K562 (cell line): ENCODE measurements at regions of chr3 and their contacts with region 1.

Region 1: DNA sequence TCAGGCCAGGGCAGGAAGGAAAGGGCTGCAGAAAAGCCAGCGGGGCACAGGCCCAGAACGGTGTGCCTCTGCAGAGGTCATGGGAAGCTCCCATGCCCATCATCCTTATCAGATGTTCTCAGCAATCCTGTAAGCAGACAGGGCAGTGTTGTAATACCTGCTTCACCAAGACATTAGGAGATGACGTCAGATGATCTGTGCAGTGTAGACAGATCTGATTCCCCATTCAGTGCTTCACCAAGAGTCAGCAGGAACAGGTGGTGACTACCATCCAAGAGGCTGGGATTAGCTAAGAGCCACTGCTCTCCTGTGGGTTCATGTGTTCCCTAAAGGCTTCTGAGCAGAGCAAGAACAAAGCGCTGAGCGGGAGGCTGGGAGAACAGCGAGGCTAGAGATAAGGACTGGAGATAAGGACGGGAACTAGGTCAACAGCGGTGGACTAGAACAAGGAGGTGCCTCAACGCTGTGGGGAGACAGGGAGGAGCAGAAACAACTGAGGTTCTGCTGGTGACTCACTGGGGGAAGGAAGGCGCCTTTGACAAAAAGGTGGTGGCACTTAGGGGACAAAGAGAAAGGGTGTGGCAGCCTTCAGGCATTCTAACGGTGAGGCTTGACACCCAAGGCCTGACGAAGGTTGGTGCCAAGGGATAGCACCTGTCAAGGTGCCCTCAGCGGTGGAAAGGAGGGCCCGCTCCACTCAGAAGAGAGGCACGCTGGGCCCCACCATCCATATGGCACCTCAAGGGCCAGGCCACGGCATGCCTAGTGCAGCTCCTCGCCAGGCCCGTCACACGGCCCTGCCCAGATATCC is 28.4 kb downstream of the CCDC12 start:
- DNase-seq: peak; percentile 79 to 91 (median 84)
- ATAC-seq: peak; percentile 81
- H3K4me3 ChIP-seq: no peak overlapping the region
- H3K27ac ChIP-seq: peak overlapping the region; percentile 61
- H3K4me1 ChIP-seq: peaks cover 54 to 81% of the 10 kb centered on the region in 2 experiments
- H3K27me3 ChIP-seq: no peaks in the 10 kb centered on the region
- CTCF ChIP-seq: no peak
- EP300 ChIP-seq: peak; percentile 55; the same call in 1 of the 2 replicates
- POLR2A ChIP-seq: no peak; the same call in 1 of the 2 replicates
- RAD21 ChIP-seq: peak in 1 of 2 experiments; percentile 31; a peak in 1 of 4 replicates

Region 2: DNA sequence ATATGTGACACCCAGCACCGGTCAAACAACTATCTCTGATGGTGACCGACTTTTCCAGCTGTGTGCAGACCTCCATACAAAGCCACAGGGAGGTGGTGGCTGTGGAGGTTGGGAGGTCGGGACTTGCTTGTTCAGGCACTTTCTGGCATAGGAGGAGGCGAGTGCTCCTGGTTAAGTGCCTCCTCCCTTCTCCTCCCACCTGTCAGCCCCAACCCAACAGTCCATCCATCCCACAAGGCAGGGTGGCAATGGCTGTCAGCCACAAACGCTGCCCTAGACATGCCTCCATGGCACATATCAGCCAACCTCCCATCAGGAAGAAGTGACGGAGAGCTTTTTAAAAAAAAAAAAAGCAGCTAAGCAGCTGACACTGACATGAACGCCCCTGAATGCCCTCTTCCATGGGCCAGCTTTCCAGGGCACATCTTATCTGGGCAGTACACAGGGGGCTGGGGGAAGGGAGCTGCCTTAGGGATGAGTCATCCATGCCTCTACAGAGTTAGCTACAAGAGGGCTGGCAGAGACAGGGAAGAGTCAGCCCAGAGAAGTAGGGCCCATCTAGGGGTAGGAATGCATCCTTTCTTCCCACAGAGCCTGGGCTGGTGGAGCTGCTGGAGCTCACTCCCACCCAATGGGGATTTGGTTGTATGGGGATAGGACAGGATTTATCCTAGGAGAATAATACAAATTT is 12.9 kb before region 1 on chr3:
- CTCF ChIA-PET with region 1: no interaction called
- POLR2A ChIA-PET with region 1: interaction called, 14 read pairs
- in situ Hi-C with region 1: no loop called
- intact Hi-C with region 1: no loop called
- DNase-seq: peak; percentile 84 to 88 (median 86)
- ATAC-seq: peak; percentile 81
- H3K4me3 ChIP-seq: no peak overlapping the region
- H3K27ac ChIP-seq: peak overlapping the region; percentile 42; the same call in 2 of the 3 replicates
- H3K4me1 ChIP-seq: peaks cover 39 to 40% of the 10 kb centered on the region in 2 experiments
- H3K27me3 ChIP-seq: no peaks in the 10 kb centered on the region
- CTCF ChIP-seq: peak; percentile 26 to 47 (median 44); a peak in 4 of 6 replicates
- EP300 ChIP-seq: peak; percentile 85
- POLR2A ChIP-seq: 0 out of 2 replicates have a peak, but pooled peaks have one; percentile 29
- RAD21 ChIP-seq: peak; percentile 14 to 31; a peak in 3 of 4 replicates

Region 3: GRCh38 chr3:46976326-46977190 is 28.4 kb after region 1 on chr3 and contains the start of gene CCDC12:
- CTCF ChIA-PET with region 1: no interaction called
- POLR2A ChIA-PET with region 1: interaction called, 7 read pairs
- in situ Hi-C with region 1: no loop called
- intact Hi-C with region 1: loop called (anchors 2 kb)
- DNase-seq: peak; percentile 95 to 99 (median 97)
- ATAC-seq: peak; percentile 87
- H3K4me3 ChIP-seq: peak within 1 kb of the TSS; percentile 68
- H3K27ac ChIP-seq: peak within 1 kb of the TSS; percentile 98
- H3K4me1 ChIP-seq: peaks cover 49 to 69% of the 10 kb centered on the region in 2 experiments
- H3K27me3 ChIP-seq: no peaks in the 10 kb centered on the region
- CTCF ChIP-seq: no peak
- EP300 ChIP-seq: peak; percentile 73
- POLR2A ChIP-seq: peak; percentile 99
- RAD21 ChIP-seq: peak in 1 of 2 experiments; percentile 20; a peak in 1 of 4 replicates
- polyA plus RNA-seq, gene CCDC12: 8.9 to 20.9 TPM

Region 4: DNA sequence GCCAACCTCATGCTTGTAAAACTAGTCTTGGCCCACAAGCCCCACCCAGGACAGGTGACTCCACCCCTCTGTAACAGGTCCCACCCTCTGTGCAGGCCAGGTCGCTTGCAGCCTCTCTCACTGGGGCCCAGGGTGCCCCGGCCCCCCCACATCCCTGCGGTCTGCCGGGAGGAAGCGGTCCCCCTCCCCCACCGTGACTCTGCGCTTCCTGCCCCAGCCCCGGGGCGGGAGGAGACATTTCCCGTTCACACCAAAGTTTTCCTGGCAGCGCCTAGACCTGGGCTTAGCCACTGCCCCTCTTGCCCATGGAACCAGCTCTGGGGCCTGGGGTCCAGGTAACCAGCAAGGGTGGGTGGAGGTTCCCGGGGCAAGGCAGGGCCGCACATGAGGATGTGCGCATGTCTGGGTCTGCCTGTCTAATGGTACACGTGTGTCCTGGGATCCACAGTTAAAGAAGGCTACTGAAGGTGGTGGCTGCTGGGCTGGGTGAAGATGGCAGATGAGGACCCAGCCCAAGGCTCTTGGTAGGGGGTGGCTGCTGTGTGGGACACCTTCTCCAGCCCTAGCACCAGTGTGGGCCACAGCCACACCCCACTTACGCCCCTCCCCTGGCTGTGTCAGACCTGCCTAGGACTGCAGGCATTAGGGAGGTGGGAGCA is 39.7 kb after region 1 on chr3:
- CTCF ChIA-PET with region 1: no interaction called
- POLR2A ChIA-PET with region 1: interaction called, 7 read pairs
- in situ Hi-C with region 1: no loop called
- intact Hi-C with region 1: loop called (anchors 1 kb)
- DNase-seq: peak; percentile 97 to 99 (median 98)
- ATAC-seq: peak; percentile 95
- H3K4me3 ChIP-seq: peak overlapping the region; percentile 46
- H3K27ac ChIP-seq: peak overlapping the region; percentile 99
- H3K4me1 ChIP-seq: peaks cover 34 to 67% of the 10 kb centered on the region in 2 experiments
- H3K27me3 ChIP-seq: no peaks in the 10 kb centered on the region
- CTCF ChIP-seq: no peak
- EP300 ChIP-seq: peak; percentile 90
- POLR2A ChIP-seq: peak; percentile 88
- RAD21 ChIP-seq: peak in 1 of 2 experiments; percentile 26; a peak in 2 of 4 replicates